Endothelial cell of umbilical vein (primary cell): ENCODE measurements at regions of chr17 and their contacts with region 1.

Region 1: DNA sequence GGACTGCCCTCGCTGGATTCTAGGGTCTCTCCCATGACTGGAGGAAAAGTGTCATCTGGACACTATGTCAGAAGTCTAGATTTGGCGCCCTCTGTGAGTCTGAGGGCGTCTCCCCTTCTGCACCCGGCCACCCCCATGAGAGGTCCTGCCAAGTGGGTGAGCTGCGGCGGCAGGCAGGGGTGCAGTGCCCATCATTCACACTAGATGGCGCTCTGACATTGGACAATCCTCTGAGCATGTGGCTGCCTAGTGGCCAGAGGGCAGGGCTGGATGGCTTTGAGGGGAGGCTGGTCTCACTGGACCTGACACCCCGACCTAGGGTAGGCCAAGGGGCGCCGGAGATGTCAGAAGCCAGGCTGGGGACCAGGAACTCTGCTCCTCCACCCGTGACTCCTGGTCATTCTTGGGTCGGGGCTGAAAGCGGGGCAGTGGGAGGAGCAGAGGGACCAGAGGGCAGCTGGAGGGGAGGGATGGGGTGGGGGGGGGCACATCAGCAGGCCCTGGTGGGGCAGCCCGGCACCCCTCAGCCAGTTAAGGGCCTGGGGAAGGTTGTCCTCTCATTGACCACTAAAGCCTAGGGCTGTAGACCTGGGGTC is 28.0 kb downstream of the MRM1 start:
- DNase-seq: peak; percentile 69
- H3K4me3 ChIP-seq: no peak overlapping the region
- H3K27ac ChIP-seq: no peak overlapping the region
- H3K4me1 ChIP-seq: no peaks in the 10 kb centered on the region
- H3K27me3 ChIP-seq: peaks cover 20 to 24% of the 10 kb centered on the region in 2 experiments
- CTCF ChIP-seq: peak; percentile 92 to 97
- POLR2A ChIP-seq: no peak

Region 2: DNA sequence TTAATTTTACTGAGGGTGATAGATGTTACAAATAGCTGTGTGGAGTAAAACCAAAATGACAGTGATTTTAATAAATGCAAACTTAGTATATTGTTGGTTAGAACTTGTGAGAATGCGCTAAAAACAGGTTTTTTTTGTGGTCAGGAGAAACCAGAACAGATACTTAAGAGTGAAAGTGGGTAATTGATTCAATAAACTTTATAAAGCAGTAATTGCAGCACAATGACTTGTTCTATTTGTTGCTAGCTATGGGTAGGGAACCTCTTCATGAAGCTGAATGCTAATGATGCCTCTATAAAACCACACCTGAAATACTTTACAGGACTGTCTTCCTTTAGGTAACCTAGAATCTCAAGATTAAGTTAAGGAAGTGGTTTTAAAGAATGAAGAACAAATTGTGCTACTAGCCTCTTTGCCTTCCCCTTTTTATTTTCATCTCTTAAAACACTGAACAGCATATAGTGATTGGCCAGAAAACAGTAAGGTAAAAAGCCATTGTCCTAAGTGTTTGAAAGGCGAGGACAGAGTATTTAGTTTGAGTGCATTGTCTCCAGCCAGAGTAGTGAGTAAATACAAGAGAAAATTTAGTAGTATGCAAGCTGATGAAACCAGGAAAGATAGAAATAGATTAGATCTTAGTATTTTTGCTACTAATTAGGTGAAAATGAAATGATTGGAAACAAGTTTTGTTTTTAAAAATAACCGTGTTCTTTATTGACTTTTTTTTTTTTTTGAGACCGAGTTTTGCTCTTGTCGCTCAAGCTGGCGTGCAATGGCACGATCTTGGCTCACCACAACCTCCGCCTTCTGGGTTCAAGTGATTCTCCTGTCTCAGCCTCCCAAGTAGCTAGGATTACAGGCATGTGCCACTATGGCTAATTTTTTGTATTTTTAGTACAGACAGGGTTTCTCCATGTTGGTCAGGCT is 78.6 kb before region 1 on chr17:
- CTCF ChIA-PET with region 1: no interaction called
- POLR2A ChIA-PET with region 1: no interaction called
- dilution Hi-C with region 1: no loop called
- intact Hi-C with region 1: no loop called
- DNase-seq: no peak
- H3K4me3 ChIP-seq: no peak overlapping the region
- H3K27ac ChIP-seq: no peak overlapping the region
- H3K4me1 ChIP-seq: peaks cover 23% of the 10 kb centered on the region
- H3K27me3 ChIP-seq: no peaks in the 10 kb centered on the region
- CTCF ChIP-seq: no peak
- POLR2A ChIP-seq: no peak

Region 3: GRCh38 chr17:36601303-36602029 is 27.9 kb before region 1 on chr17 and contains the start of gene MRM1:
- CTCF ChIA-PET with region 1: interaction called, 29 read pairs
- POLR2A ChIA-PET with region 1: no interaction called
- dilution Hi-C with region 1: no loop called
- intact Hi-C with region 1: loop called (anchors 1 kb)
- DNase-seq: peak; percentile 93
- H3K4me3 ChIP-seq: peak within 1 kb of the TSS; percentile 34 to 67 (median 63)
- H3K27ac ChIP-seq: peak within 1 kb of the TSS; percentile 54
- H3K4me1 ChIP-seq: peaks cover 16% of the 10 kb centered on the region
- H3K27me3 ChIP-seq: no peaks in the 10 kb centered on the region
- CTCF ChIP-seq: peak in 1 of 2 donors; percentile 27
- POLR2A ChIP-seq: peak; percentile 98
- total RNA-seq, gene MRM1: 5.2 and 5.9 TPM in 2 replicates

Region 4: GRCh38 chr17:36614933-36615332 is 14.4 kb before region 1 on chr17:
- CTCF ChIA-PET with region 1: interaction called, 17 read pairs
- POLR2A ChIA-PET with region 1: no interaction called
- dilution Hi-C with region 1: no loop called
- intact Hi-C with region 1: no loop called
- DNase-seq: no peak
- H3K4me3 ChIP-seq: no peak overlapping the region
- H3K27ac ChIP-seq: no peak overlapping the region
- H3K4me1 ChIP-seq: no peaks in the 10 kb centered on the region
- H3K27me3 ChIP-seq: peaks cover 0 to 5% of the 10 kb centered on the region in 2 experiments
- CTCF ChIP-seq: no peak
- POLR2A ChIP-seq: no peak

Region 5: GRCh38 chr17:36641877-36642845 is 12.8 kb after region 1 on chr17:
- CTCF ChIA-PET with region 1: interaction called, 18 read pairs
- POLR2A ChIA-PET with region 1: no interaction called
- dilution Hi-C with region 1: no loop called
- intact Hi-C with region 1: no loop called
- DNase-seq: no peak
- H3K4me3 ChIP-seq: peak overlapping the region in 1 of 3 experiments; percentile 21
- H3K27ac ChIP-seq: no peak overlapping the region
- H3K4me1 ChIP-seq: no peaks in the 10 kb centered on the region
- H3K27me3 ChIP-seq: peaks cover 54 to 57% of the 10 kb centered on the region in 2 experiments
- CTCF ChIP-seq: no peak
- POLR2A ChIP-seq: no peak

Region 6: GRCh38 chr17:36705874-36706731 is 76.8 kb after region 1 on chr17:
- CTCF ChIA-PET with region 1: no interaction called
- POLR2A ChIA-PET with region 1: no interaction called
- dilution Hi-C with region 1: no loop called
- intact Hi-C with region 1: loop called (anchors 1 kb)
- DNase-seq: peak; percentile 10
- H3K4me3 ChIP-seq: no peak overlapping the region
- H3K27ac ChIP-seq: no peak overlapping the region
- H3K4me1 ChIP-seq: no peaks in the 10 kb centered on the region
- H3K27me3 ChIP-seq: peaks cover 2 to 11% of the 10 kb centered on the region in 2 experiments
- CTCF ChIP-seq: peak; percentile 59 to 68
- POLR2A ChIP-seq: no peak

Region 7: DNA sequence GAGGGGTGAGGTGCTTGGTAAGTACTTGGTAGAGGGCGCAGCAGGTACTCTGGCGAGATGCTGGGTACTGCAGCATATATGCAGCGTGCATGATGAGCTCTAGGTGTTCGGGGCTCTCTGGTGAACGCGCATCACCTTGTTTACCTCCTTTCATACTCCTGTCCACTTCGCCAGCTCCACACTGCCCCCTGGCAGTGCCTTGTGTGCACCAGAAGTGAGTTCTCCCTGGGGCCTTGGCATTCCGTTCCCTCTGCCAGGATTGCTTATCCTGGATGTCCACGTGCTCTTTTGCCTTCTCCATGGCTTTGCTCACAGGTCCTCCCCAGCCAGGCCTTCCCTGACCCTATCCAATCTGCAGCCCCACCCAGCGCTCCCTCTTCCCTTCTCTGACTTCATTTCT is 126.2 kb after region 1 on chr17:
- CTCF ChIA-PET with region 1: interaction called, 15 read pairs
- POLR2A ChIA-PET with region 1: no interaction called
- dilution Hi-C with region 1: no loop called
- intact Hi-C with region 1: loop called (anchors 1 kb)
- DNase-seq: peak; percentile 5
- H3K4me3 ChIP-seq: no peak overlapping the region
- H3K27ac ChIP-seq: no peak overlapping the region
- H3K4me1 ChIP-seq: no peaks in the 10 kb centered on the region
- H3K27me3 ChIP-seq: peaks cover 0 to 4% of the 10 kb centered on the region in 2 experiments
- CTCF ChIP-seq: peak; percentile 19 to 48
- POLR2A ChIP-seq: no peak

Region 8: DNA sequence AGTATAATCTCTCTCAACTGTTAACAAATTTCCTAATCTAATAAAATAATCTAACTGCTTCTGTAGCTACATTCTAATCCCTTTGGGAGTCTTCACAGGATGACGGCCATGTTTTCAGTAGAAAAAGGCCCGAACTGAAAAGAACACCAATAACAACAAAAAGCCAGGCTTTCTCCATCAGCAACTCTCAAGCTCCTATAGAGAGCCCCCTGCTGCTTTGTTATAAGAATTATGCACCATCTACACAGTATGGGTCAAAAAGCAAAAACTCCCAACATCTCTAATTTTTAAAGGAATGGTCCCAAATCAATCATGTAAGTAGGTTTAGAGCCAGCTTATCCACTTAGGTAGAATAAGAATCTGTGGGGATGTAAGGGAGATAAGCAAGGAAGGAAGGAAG is 582.8 kb after region 1 on chr17:
- CTCF ChIA-PET with region 1: interaction called, 5 read pairs
- POLR2A ChIA-PET with region 1: no interaction called
- dilution Hi-C with region 1: no loop called
- intact Hi-C with region 1: loop called (anchors 1 kb)
- DNase-seq: peak; percentile 13
- H3K4me3 ChIP-seq: no peak overlapping the region
- H3K27ac ChIP-seq: no peak overlapping the region
- H3K4me1 ChIP-seq: no peaks in the 10 kb centered on the region
- H3K27me3 ChIP-seq: no peaks in the 10 kb centered on the region
- CTCF ChIP-seq: peak; percentile 3 to 34
- POLR2A ChIP-seq: no peak